Activated CD8-positive, alpha-beta T cell treated with anti-CD3 and anti-CD28 coated beads, Interleukin-2, amount 10 ng/mL, durations not matched to agents 7 days and 5 days (primary cell): ENCODE measurements at regions of chr12 and their contacts with region 1.

Region 1: GRCh38 chr12:56029666-56030293 is 8.9 kb downstream of the IKZF4 start:
- DNase-seq: peak; percentile 64
- ATAC-seq: peak; percentile 64
- H3K4me3 Mint-ChIP-seq: no peak overlapping the region
- H3K27ac Mint-ChIP-seq: peak overlapping the region; percentile 8
- H3K4me1 Mint-ChIP-seq: peaks cover 54% of the 10 kb centered on the region
- H3K27me3 Mint-ChIP-seq: no peaks in the 10 kb centered on the region

Region 2: GRCh38 chr12:55392032-55392795 is 637.6 kb before region 1 on chr12:
- CTCF ChIA-PET with region 1: no interaction called
- POLR2A ChIA-PET with region 1: no interaction called
- DNase-seq: no peak
- ATAC-seq: no peak
- H3K4me3 Mint-ChIP-seq: no peak overlapping the region
- H3K27ac Mint-ChIP-seq: no peak overlapping the region
- H3K4me1 Mint-ChIP-seq: no peaks in the 10 kb centered on the region
- H3K27me3 Mint-ChIP-seq: peaks cover 6% of the 10 kb centered on the region

Region 3: GRCh38 chr12:55991110-55991509 is 38.7 kb before region 1 on chr12:
- CTCF ChIA-PET with region 1: interaction called, 60 read pairs
- POLR2A ChIA-PET with region 1: no interaction called
- DNase-seq: no peak
- ATAC-seq: no peak
- H3K4me3 Mint-ChIP-seq: no peak overlapping the region
- H3K27ac Mint-ChIP-seq: no peak overlapping the region
- H3K4me1 Mint-ChIP-seq: peaks cover 5% of the 10 kb centered on the region
- H3K27me3 Mint-ChIP-seq: no peaks in the 10 kb centered on the region

Region 4: GRCh38 chr12:56007564-56008559 is 21.9 kb before region 1 on chr12:
- CTCF ChIA-PET with region 1: interaction called, 20 read pairs
- POLR2A ChIA-PET with region 1: interaction called, 3 read pairs
- DNase-seq: peak; percentile 71
- ATAC-seq: peak; percentile 87
- H3K4me3 Mint-ChIP-seq: peak overlapping the region; percentile 82
- H3K27ac Mint-ChIP-seq: peak overlapping the region; percentile 86
- H3K4me1 Mint-ChIP-seq: peaks cover 29% of the 10 kb centered on the region
- H3K27me3 Mint-ChIP-seq: no peaks in the 10 kb centered on the region

Region 5: DNA sequence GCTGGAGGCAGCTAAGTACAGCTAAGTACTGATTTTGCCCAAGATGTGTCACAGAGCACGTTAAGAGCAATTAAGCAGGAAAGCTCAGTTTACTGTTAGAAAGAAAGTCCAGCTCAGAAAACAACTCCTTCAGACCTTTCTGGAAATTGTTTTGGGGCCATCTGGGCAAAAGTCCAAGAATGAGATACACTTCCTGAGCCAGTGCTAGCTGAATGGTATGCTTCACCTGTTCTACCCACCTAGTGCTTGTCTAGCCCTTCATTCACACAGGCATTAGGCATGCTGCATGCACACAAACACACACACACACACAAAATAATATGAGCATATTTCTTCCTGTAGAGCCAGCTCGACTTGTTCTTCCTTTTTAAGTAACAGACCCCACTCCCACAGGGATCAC is 15.6 kb before region 1 on chr12:
- CTCF ChIA-PET with region 1: interaction called, 28 read pairs
- POLR2A ChIA-PET with region 1: no interaction called
- DNase-seq: no peak
- ATAC-seq: no peak
- H3K4me3 Mint-ChIP-seq: no peak overlapping the region
- H3K27ac Mint-ChIP-seq: no peak overlapping the region
- H3K4me1 Mint-ChIP-seq: peaks cover 17% of the 10 kb centered on the region
- H3K27me3 Mint-ChIP-seq: no peaks in the 10 kb centered on the region

Region 6: GRCh38 chr12:56053407-56053893 is 23.7 kb after region 1 on chr12:
- CTCF ChIA-PET with region 1: no interaction called
- POLR2A ChIA-PET with region 1: no interaction called
- DNase-seq: no peak
- ATAC-seq: no peak
- H3K4me3 Mint-ChIP-seq: no peak overlapping the region
- H3K27ac Mint-ChIP-seq: no peak overlapping the region
- H3K4me1 Mint-ChIP-seq: peaks cover 9% of the 10 kb centered on the region
- H3K27me3 Mint-ChIP-seq: peaks cover 3% of the 10 kb centered on the region

Region 7: DNA sequence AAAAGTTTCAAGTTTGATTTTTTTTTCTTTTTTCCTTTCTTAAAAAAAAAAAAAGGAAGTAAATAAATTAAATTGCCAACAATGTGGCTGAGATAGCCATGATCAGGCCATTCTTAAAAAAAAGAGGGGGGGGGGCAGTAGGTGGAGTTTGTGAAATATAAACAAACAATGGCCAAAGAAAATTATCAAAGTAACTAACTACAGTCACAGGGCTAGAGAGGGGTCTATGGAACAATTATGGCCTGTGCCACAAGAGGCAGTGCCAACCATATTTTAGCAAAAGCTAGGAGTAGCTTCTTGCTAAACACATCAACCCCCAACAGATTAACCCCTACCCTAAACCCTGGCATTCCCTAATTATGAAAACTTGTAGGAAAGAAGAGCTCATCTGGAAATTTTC is 175.7 kb after region 1 on chr12:
- CTCF ChIA-PET with region 1: no interaction called
- POLR2A ChIA-PET with region 1: no interaction called
- DNase-seq: no peak
- ATAC-seq: peak; percentile 41
- H3K4me3 Mint-ChIP-seq: no peak overlapping the region
- H3K27ac Mint-ChIP-seq: no peak overlapping the region
- H3K4me1 Mint-ChIP-seq: no peaks in the 10 kb centered on the region
- H3K27me3 Mint-ChIP-seq: no peaks in the 10 kb centered on the region

Region 8: DNA sequence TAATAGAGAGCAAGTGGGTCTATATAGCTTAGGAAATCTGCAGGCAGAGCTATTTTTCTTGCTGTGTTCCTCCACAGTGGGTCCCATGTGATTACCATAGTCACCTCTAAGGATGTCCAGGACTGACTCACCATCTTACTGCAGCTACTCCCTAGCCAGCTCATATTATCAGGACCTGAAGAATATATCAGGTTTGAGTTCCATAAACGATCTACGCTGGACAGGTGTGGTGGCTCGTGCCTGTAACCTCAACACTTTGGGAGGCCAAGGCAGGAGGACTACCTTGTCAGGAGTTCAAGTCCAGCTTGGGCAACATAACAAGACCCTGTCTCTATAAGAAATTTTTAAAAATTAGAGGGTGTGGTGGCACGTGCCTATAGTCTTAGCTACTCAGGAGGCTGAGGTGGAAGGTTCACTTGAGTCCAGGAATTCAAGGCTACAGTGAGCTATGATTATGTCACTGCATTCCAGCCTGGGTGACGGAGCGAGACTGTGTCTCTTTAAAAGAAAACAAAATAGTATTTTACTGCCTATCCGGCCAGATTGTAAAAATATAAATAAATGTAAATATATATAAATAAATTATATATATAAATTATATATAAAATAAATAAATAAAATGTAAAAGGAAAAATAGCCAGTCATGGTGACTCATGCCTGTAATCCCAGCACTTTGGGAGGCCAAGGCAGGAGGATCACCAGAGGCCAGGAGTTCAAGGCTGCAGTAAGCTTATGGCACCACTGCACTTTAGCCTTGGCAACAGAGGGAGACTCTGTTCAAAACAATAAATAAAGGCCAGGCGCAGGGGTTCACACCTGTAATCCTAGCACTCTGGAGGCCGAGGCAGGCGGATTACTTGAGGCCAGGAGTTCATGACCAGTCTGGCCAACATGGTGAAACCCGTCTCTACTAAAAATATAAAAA is 431.7 kb after region 1 on chr12:
- CTCF ChIA-PET with region 1: no interaction called
- POLR2A ChIA-PET with region 1: no interaction called
- DNase-seq: no peak
- ATAC-seq: no peak
- H3K4me3 Mint-ChIP-seq: no peak overlapping the region
- H3K27ac Mint-ChIP-seq: no peak overlapping the region
- H3K4me1 Mint-ChIP-seq: peaks cover 5% of the 10 kb centered on the region
- H3K27me3 Mint-ChIP-seq: no peaks in the 10 kb centered on the region